ENCODE measurements at regions of chr4 and their contacts with region 1.

Region 1: GRCh38 chr4:38179690-38180377 is 219.6 kb downstream of the PTTG2 start:
- DNase-seq: no peak
- H3K4me3 ChIP-seq: no peak overlapping the region
- CTCF ChIP-seq: peak; percentile 75

Region 2: GRCh38 chr4:38062088-38062893 is 117.5 kb before region 1 on chr4:
- CTCF ChIA-PET with region 1: interaction called, 26 read pairs
- POLR2A ChIA-PET with region 1: no interaction called
- DNase-seq: no peak
- H3K4me3 ChIP-seq: no peak overlapping the region
- CTCF ChIP-seq: peak; percentile 62

Region 3: DNA sequence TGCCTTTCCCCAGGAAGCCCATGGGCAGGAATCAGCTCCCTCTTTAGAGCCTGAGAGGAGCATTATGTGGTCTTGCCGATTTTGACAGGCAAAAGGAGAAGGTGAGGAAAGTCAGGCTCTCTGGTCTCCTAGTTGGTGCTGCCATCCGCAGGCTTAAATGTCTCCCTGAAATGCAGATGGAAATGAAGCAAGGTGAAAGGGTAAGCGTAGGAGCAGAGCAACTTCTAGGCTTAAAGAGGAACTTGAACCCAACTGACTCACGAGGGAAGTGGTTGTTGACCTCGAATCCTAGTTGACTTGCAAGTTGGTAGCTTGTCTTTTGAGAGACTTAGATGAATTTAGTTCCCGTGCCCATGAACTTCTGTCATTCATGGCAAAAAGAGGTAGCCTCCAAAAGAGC is 13.8 kb before region 1 on chr4:
- CTCF ChIA-PET with region 1: interaction called, 37 read pairs
- POLR2A ChIA-PET with region 1: no interaction called
- DNase-seq: no peak
- H3K4me3 ChIP-seq: no peak overlapping the region
- CTCF ChIP-seq: no peak

Region 4: GRCh38 chr4:38319456-38320342 is 139.9 kb after region 1 on chr4:
- CTCF ChIA-PET with region 1: interaction called, 31 read pairs
- POLR2A ChIA-PET with region 1: no interaction called
- DNase-seq: peak; percentile 40
- H3K4me3 ChIP-seq: no peak overlapping the region
- CTCF ChIP-seq: peak; percentile 98

Region 5: GRCh38 chr4:38687571-38688011 is 507.8 kb after region 1 on chr4:
- CTCF ChIA-PET with region 1: interaction called, 19 read pairs
- POLR2A ChIA-PET with region 1: no interaction called
- DNase-seq: no peak
- H3K4me3 ChIP-seq: no peak overlapping the region
- CTCF ChIP-seq: no peak

Region 6: DNA sequence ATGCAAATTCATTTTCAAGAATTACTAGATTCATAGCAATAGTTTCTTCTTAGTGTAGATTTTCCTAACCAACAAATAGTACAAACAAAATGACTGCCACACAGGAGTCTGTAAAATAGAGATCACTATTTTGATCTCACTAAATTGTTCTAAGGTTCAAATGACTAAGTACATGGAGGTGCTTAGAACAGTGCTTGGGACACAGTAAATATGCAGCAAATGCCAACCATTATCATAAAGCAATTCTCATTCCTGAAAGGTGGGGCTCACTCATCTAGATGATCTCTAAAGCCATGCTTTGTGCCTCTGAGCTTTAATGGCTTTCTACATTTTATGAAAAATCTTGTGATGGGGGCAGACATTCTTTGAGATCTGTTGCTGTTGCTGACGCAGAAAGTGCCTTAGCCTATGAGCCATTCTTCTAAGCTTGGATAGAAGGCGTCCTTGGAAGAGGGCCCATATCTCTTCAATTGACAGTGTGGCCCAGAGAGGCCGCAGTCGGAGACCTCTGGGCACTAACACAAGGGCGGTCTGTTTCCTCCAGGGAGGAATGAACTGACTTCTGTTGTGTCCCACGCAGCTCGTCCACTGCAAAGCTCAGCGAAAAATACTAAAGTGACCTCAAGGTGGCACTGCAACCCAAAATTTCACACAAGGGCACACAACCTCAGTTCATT is 579.4 kb after region 1 on chr4:
- CTCF ChIA-PET with region 1: interaction called, 10 read pairs
- POLR2A ChIA-PET with region 1: no interaction called
- DNase-seq: no peak
- H3K4me3 ChIP-seq: no peak overlapping the region
- CTCF ChIP-seq: peak; percentile 56